Activated CD4-positive, alpha-beta memory T cell treated with anti-CD3 and anti-CD28 coated beads for 36 hours (primary cell): ENCODE measurements at regions of chr9 and their contacts with region 1.

Region 1: GRCh38 chr9:91071185-91071990 is 269.8 kb downstream of the SYK start:
- DNase-seq: peak; percentile 88
- H3K4me3 Mint-ChIP-seq: peak overlapping the region; percentile 9
- H3K27ac Mint-ChIP-seq: peak overlapping the region; percentile 85
- H3K4me1 Mint-ChIP-seq: peaks cover 18% of the 10 kb centered on the region
- H3K27me3 Mint-ChIP-seq: peaks cover 7% of the 10 kb centered on the region

Region 2: DNA sequence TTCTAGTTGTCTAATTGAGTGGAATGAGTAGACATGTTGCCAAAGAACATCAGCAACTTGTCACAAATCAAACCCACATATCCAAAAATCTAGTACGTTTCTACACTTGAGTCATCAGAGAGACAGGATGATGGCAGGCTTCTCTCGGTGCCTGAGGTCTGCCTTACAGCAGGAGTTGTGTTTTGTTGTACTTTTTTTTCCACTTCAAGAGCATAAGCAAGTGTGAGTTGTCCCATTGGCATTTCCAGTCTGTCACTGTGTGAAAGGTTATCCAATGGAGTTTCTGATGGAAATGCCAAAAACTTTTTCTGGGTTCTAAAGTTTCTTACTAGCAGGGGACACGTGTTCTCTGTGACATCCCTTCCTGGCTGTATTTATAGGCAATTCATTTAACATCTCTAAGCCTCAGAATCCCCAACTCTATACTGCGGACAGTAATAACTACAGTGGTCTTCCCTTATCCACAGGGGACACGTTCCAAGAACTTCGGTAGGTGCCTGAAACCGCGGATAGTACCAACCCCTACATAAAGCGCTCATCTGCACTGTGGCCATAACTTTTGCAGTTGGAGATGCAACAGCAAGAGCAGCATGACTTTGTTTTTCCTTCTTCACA is 23.3 kb before region 1 on chr9:
- CTCF ChIA-PET with region 1: interaction called, 7 read pairs
- POLR2A ChIA-PET with region 1: no interaction called
- intact Hi-C with region 1: loop called (anchors 1 kb)
- DNase-seq: peak; percentile 73
- H3K4me3 Mint-ChIP-seq: no peak overlapping the region
- H3K27ac Mint-ChIP-seq: peak overlapping the region; percentile 83
- H3K4me1 Mint-ChIP-seq: peaks cover 58% of the 10 kb centered on the region
- H3K27me3 Mint-ChIP-seq: peaks cover 40% of the 10 kb centered on the region